ENCODE measurements at regions of chr4 and their contacts with region 1.

Region 1: DNA sequence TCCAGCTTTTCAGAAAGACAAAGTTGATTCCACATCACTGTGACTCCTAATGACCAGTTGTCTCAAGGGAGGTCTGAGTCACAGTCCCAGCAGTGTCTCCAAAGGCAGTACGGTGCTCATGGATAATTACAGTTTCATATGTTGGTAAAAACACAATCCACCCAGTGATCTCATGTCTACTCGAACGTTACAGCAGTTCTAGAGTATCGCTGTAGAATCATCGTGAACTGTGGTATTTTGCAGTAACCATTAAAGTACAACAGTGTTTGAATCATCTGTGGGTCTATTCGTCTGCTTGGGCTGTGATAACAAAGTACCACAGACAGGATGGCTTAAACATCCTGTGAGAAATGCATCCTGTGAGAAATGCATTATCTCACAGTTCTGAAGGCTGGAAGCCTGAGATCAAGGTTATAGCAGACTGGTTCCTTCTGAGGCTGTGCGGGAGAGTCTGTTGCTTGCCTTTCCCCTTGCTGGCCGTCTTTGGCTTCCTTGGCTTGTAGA is 121.1 kb upstream of the SORBS2 start:
- DNase-seq: peak in 1 of 2 donors; percentile 71
- H3K4me3 ChIP-seq: peak overlapping the region in 1 of 2 donors; percentile 52
- H3K27ac ChIP-seq: peak overlapping the region in 1 of 2 donors; percentile 52
- H3K4me1 ChIP-seq: peaks cover 0 to 10% of the 10 kb centered on the region in 2 donors
- H3K27me3 ChIP-seq: no peaks in the 10 kb centered on the region
- CTCF ChIP-seq: no peak

Region 2: DNA sequence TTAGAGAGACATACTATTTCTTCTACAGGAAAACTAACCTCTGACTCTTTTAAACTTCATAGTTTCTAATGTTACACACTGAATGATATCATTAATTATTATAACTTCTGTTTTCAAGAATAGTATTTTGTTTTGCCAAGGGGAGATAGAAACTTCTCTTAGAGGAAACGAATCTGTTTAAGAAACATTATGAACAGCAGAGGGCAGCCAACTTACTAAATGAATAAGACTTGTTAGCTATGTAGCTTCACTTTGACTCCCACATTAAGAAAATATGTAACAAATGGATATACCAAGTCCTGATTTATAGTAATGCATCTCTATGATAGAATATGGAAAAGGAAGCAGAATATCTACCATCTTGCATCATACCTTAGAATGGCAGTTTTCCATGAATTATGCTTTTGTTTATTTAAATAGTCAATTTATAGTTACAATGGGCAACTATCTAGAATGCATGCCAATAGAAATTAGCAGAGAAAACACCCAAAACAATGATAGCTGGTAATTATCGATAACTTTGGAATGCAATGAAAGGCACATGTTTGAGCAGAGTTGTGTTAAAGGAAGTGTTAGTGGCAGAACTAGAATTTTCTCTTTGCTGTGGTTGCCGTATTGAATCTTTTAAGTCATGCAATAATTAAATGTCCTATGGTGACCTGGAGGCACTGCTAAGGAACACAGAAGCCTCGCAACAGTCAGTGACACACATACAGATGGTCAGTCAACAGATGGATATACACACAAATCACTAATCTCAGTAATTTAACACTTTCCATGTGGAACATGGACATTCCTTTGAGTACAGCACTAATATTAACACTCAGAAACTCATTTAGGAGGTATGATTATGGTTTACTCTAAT is 292.1 kb before region 1 on chr4:
- intact Hi-C with region 1: loop called (anchors 5 kb)
- DNase-seq: no peak
- H3K4me3 ChIP-seq: no peak overlapping the region
- H3K27ac ChIP-seq: no peak overlapping the region
- H3K4me1 ChIP-seq: peaks cover 0 to 3% of the 10 kb centered on the region in 2 donors
- H3K27me3 ChIP-seq: no peaks in the 10 kb centered on the region
- CTCF ChIP-seq: peak in 2 of 3 experiments; percentile 40 to 56

Measured in ascending aorta (tissue), 2 donors.